Uterus (tissue), 4 donors: ENCODE measurements at regions of chr19 and their contacts with region 1.

Region 1: GRCh38 chr19:12766051-12766521 is 9.3 kb downstream of the HOOK2 start:
- DNase-seq: peak; percentile 74 to 84
- H3K4me3 ChIP-seq: peak overlapping the region; percentile 32 to 42
- H3K27ac ChIP-seq: peak overlapping the region; percentile 56 to 59
- H3K4me1 ChIP-seq: no peaks in the 10 kb centered on the region
- H3K27me3 ChIP-seq: no peaks in the 10 kb centered on the region
- CTCF ChIP-seq: peak; percentile 95 to 98 (median 96)
- POLR2A ChIP-seq: peak; percentile 29 to 30

Region 2: DNA sequence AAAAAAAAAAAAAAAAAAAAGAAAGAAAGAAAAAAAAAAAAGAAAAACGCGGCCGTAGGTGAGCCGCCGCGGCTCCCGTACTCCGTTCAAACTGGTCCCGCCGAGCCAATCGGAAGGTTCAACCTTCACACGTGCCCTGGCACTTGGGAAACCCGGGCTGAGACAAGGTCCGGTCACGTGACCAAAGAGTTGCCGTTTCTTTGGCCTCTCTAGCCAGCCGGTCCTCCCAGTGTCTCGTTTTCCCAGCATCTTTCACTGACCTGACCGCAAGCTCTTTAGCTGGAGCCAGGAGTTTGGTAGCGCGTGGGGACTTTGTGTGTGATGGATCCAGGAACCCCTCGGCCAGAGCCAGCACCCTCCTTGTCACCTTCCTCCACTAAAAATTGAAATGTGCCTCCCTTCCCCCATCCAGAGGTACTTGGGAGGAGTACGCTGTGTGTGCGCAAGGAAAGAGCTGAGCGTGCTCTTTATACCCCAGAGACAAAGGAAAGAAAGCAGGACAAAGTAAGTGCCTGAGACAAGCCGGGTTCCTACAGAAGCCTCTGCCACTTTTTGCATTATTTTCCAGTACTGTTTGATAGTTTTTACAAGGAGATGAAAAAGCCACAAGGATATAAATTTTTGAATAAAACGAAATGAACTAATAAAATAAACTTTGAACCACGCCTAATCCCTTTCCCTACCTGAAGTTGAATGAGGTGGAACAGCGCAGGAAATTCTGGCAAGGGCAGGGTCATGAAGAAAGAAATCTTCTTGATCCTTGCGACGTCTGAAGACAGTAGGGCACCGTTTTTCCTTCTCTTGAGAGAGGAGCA is 43.3 kb before region 1 on chr19:
- intact Hi-C with region 1: no loop called
- DNase-seq: peak; percentile 94 to 99
- H3K4me3 ChIP-seq: peak overlapping the region; percentile 71 to 86
- H3K27ac ChIP-seq: peak overlapping the region; percentile 98
- H3K4me1 ChIP-seq: peaks cover 4 to 5% of the 10 kb centered on the region in 2 donors
- H3K27me3 ChIP-seq: no peaks in the 10 kb centered on the region
- CTCF ChIP-seq: peak in 1 of 4 experiments; percentile 23
- POLR2A ChIP-seq: peak in 1 of 2 donors; percentile 42

Region 3: GRCh38 chr19:12801466-12802266 is 35.6 kb after region 1 on chr19 and contains the starts of genes PRDX2 and THSD8:
- intact Hi-C with region 1: loop called (anchors 5 kb)
- DNase-seq: peak; percentile 72 to 80
- H3K4me3 ChIP-seq: peak within 1 kb of the TSS; percentile 55 to 84
- H3K27ac ChIP-seq: peak within 1 kb of the TSS; percentile 56 to 86
- H3K4me1 ChIP-seq: peaks cover 0 to 9% of the 10 kb centered on the region in 2 donors
- H3K27me3 ChIP-seq: no peaks in the 10 kb centered on the region
- CTCF ChIP-seq: peak in 2 of 4 experiments; percentile 18 to 19
- POLR2A ChIP-seq: peak; percentile 72 to 77
- total RNA-seq, gene PRDX2: 148 to 178 (median 163) TPM
- total RNA-seq, gene THSD8: 4.1 TPM in 1 of 4 donors, not detected in the others

Region 4: DNA sequence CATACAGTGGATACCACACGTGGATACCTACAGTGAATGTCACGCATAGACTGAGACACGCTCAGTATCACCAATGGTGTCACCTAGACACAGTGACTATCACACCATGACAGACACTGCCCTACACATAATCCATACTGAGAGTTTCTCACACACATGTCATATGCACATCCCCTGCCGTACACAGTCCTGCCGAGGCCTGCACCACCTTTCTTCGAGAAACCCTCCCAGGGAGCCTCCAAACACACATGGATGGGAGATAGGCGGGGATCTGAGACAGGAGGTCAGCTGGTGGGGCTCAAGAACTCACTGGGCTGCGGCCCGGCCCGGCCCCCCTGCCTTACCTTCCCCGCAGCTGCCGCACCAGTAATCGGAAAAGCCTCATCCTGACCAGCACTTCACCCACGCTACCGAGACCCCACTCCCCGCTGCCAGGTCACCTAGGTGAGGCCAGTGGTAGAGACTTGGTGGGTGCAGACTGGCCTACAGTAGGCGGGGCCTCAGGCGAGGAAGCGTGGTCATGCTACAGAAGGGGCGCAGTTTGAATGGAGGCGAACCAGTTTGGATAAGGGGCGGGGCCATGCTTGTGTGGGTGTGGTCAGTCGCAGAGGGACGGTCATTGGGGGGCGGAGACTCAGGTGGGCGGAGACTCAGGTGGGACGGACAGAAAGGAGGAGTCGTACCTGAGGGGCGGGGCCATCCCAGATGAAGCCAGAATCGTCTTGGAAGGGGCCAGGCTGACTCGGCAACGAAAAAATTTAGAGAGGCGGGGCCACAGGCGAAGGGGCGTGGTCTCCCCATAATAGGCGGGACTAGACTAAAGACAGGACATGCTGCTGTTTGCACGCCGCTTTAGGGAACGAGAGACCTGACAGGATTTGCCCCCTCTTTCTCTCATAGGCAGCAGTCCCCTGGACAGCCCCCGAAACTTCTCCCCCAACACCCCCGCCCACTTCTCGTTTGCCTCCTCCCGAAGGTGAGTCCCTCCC is 74.3 kb after region 1 on chr19:
- intact Hi-C with region 1: loop called (anchors 5 kb)
- DNase-seq: peak in 1 of 2 donors; percentile 44
- H3K4me3 ChIP-seq: no peak overlapping the region
- H3K27ac ChIP-seq: no peak overlapping the region
- H3K4me1 ChIP-seq: peaks cover 0 to 16% of the 10 kb centered on the region in 2 donors
- H3K27me3 ChIP-seq: peaks cover 37 to 51% of the 10 kb centered on the region in 2 donors
- CTCF ChIP-seq: no peak
- POLR2A ChIP-seq: no peak

Region 5: GRCh38 chr19:14517840-14518505 is 1751.9 kb after region 1 on chr19 and contains the start of gene DNAJB1:
- intact Hi-C with region 1: no loop called
- DNase-seq: peak; percentile 76 to 87
- H3K4me3 ChIP-seq: peak within 1 kb of the TSS; percentile 78 to 100
- H3K27ac ChIP-seq: peak within 1 kb of the TSS; percentile 99 to 100
- H3K4me1 ChIP-seq: peaks cover 0 to 6% of the 10 kb centered on the region in 2 donors
- H3K27me3 ChIP-seq: no peaks in the 10 kb centered on the region
- CTCF ChIP-seq: peak in 1 of 4 experiments; percentile 7
- POLR2A ChIP-seq: peak; percentile 94 to 96
- total RNA-seq, gene DNAJB1: 10.2 to 66.9 (median 40.6) TPM